Heart left ventricle (tissue), 16 donors: ENCODE measurements at regions of chr5 and their contacts with region 1.

Region 1: GRCh38 chr5:180860887-180861822 is at the start of gene ZFP62:
- DNase-seq: peak; percentile 91 to 96 (median 96)
- ATAC-seq: peak; percentile 96 to 99 (median 98)
- H3K4me3 ChIP-seq: peak within 1 kb of the TSS; percentile 49 to 100 (median 87)
- H3K27ac ChIP-seq: peak within 1 kb of the TSS; percentile 72 to 98 (median 92)
- H3K4me1 ChIP-seq: peaks cover 0 to 23% (median 12%) of the 10 kb centered on the region in 12 donors
- H3K27me3 ChIP-seq: peaks cover 0 to under 1% (median 0%) of the 10 kb centered on the region in 9 donors
- CTCF ChIP-seq: peak in 4 of 12 donors; percentile 5 to 20 (median 12)
- POLR2A ChIP-seq: peak in 1 of 2 donors; percentile 63
- total RNA-seq, gene ZFP62: 9.4 to 18.6 (median 13.8) TPM

Region 2: DNA sequence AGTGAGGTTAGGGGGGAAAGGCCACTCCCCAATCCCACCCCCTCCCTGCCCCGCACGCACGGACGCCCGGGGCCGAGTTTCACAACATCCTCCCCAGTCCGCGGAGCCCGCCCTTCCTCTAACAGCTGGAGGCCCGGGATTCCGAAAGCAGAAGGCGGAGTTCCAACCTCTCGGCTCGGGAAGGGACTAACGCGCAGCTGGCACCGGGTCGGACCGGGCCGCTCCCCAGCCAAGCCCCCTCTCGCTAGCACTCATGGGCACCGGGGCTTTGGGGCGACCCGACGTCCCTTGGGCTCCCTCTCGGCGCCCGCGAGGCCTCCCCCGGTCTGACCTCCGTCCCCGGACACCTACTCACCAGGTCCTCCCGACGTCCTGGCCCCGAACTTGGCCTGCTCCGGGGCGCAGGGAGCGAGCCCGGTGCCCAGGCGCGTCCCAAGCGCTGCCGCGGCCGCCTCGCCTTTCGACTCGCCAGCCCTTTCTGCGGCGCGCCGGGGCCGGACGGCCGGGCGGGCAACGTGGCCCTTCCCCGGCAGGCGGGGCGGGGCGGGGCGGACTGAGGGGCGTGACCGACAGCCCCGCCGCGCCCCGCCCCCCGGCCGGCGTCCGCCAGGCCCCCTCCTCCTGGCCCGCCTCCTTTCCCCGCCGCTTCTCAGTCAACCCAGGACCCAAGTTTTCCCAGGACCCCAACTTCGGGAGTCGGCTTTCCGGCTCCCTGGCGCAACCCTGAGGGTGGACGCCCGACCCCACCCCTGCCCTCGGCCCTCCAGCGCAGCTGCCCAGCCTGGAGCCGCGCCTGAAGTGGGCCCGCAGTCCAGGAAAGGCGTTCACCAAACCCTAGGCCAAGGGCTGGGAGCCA is 58.6 kb before region 1 on chr5 and contains the start of gene MGAT1:
- intact Hi-C with region 1: loop called in 5 of 10 experiments (anchors 2 to 5 kb)
- DNase-seq: peak; percentile 93 to 94 (median 93)
- ATAC-seq: peak; percentile 49 to 92 (median 84)
- H3K4me3 ChIP-seq: peak within 1 kb of the TSS; percentile 89 to 99 (median 96)
- H3K27ac ChIP-seq: peak within 1 kb of the TSS; percentile 94 to 100 (median 99)
- H3K4me1 ChIP-seq: peaks cover 32 to 93% (median 71%) of the 10 kb centered on the region in 12 donors
- H3K27me3 ChIP-seq: no peaks in the 10 kb centered on the region
- CTCF ChIP-seq: no peak
- POLR2A ChIP-seq: peak; percentile 22 to 86
- total RNA-seq, gene MGAT1: 50.9 to 162 (median 83.5) TPM

Region 3: GRCh38 chr5:180831139-180832048 is 29.8 kb before region 1 on chr5:
- intact Hi-C with region 1: loop called in 2 of 10 experiments (anchors 2 kb)
- DNase-seq: peak; percentile 91 to 93 (median 93)
- ATAC-seq: peak; percentile 95 to 98 (median 98)
- H3K4me3 ChIP-seq: peak overlapping the region; percentile 67 to 100 (median 87)
- H3K27ac ChIP-seq: peak overlapping the region; percentile 94 to 100 (median 98)
- H3K4me1 ChIP-seq: peaks cover 0 to 56% (median 27%) of the 10 kb centered on the region in 12 donors
- H3K27me3 ChIP-seq: no peaks in the 10 kb centered on the region
- CTCF ChIP-seq: peak in 7 of 12 donors; percentile 13 to 49 (median 36)
- POLR2A ChIP-seq: peak; percentile 45 to 74

Region 4: DNA sequence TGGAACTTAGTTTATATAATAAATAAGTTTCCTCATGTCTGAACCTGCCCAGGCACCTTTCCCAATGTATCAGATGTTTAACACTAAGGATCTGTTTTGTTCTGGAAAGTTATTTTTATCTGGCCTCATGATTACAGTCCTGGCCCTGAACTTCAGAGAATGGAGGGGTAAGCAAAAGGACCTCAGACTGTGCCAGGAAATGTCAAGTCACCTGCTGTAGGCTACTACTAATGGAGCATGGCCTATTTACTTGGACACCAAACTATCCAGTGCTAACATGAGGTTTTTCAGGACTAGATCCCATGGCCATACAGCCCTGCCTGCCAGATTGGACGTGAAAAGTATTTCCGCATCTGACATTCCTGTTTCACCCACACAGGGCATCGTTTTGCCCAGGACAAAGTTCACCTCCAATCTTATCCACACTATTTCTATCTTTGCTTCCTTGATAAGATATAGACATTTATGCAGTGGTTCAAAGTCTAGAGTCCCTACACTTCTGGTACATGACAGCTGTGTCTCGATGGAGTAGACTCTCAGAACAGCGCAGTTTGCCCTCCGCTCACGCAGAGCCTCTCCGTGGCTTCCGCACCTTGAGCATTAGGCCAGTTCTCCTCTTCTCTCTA is 37.6 kb after region 1 on chr5 and contains the start of gene BTNL8:
- intact Hi-C with region 1: no loop called
- DNase-seq: no peak
- ATAC-seq: no peak
- H3K4me3 ChIP-seq: peak within 1 kb of the TSS in 1 of 12 donors; percentile 8
- H3K27ac ChIP-seq: peak within 1 kb of the TSS in 5 of 12 donors; percentile 2 to 46 (median 32)
- H3K4me1 ChIP-seq: peaks cover 0 to 3% (median 0%) of the 10 kb centered on the region in 12 donors
- H3K27me3 ChIP-seq: peaks cover 0 to 3% (median 0%) of the 10 kb centered on the region in 9 donors
- CTCF ChIP-seq: no peak
- POLR2A ChIP-seq: no peak
- total RNA-seq, gene BTNL8: 0.17 to 0.84 (median 0.24) TPM in 3 of 9 donors, not detected in the others

Region 5: DNA sequence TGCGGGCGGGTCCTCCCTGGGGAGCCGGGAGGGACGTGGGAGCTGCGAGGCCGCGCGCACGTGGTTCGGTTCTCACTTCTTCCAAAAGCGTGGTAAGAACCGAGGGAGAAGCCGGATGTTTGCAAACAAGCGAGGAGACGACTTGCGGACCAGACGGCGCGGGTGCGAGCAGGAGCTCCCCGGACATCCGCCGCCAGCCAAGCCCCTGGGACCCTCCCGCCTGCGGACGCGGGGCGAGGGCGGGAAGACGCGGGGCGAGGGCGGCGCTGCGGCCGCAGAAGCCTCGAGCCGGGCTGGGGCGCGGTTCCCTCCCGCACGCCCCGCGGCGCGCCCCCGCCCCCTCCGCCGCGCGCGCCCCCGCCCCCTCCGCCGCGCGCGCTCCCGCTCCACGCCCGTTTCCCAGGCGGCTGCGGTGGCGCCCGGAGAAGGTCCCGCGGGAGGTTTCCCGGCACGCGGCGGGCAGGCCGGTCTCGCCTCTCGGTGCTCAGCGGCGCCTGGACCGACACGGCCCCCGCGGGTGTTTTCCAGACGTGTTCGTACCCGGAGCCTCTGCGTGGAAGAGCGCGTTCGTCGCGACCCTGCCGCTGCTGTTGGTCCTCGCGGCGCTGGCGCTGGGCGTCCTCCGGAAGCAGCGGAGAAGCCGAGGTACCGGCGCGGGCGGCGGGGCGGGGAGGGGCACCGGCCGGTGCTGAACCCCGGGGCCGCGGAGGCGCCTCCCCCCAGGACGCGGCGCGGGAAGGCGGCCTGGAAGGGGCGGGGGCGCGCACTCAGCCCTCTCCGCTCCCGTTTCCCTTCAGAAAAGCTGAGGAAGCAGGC is 191.7 kb after region 1 on chr5:
- intact Hi-C with region 1: loop called in 2 of 10 experiments (anchors 5 kb)
- DNase-seq: peak in 2 of 5 donors; percentile 49 to 65
- ATAC-seq: peak in 3 of 4 donors; percentile 36 to 55 (median 47)
- H3K4me3 ChIP-seq: peak overlapping the region; percentile 34 to 72 (median 60)
- H3K27ac ChIP-seq: peak overlapping the region; percentile 57 to 94 (median 88)
- H3K4me1 ChIP-seq: peaks cover 0 to 42% (median 18%) of the 10 kb centered on the region in 12 donors
- H3K27me3 ChIP-seq: peaks cover 20 to 88% (median 66%) of the 10 kb centered on the region in 9 donors
- CTCF ChIP-seq: no peak
- POLR2A ChIP-seq: no peak

Region 6: GRCh38 chr5:181173420-181174342 is 312.5 kb after region 1 on chr5:
- intact Hi-C with region 1: loop called in 1 of 10 experiments (anchors 10 kb)
- DNase-seq: no peak
- ATAC-seq: peak in 2 of 4 donors; percentile 20 to 47
- H3K4me3 ChIP-seq: peak overlapping the region in 6 of 12 donors; percentile 5 to 33 (median 20)
- H3K27ac ChIP-seq: peak overlapping the region in 8 of 12 donors; percentile 14 to 66 (median 51)
- H3K4me1 ChIP-seq: peaks cover 0 to 27% (median 3%) of the 10 kb centered on the region in 12 donors
- H3K27me3 ChIP-seq: peaks cover 23 to 81% (median 60%) of the 10 kb centered on the region in 9 donors
- CTCF ChIP-seq: no peak
- POLR2A ChIP-seq: no peak